ENCODE measurements at regions of chr1 and their contacts with region 1.

Region 1: GRCh38 chr1:15028102-15028501 is 125.4 kb upstream of the TMEM51 start:
- ATAC-seq: peak; percentile 39 to 95 (median 90)
- H3K4me3 ChIP-seq: no peak overlapping the region
- H3K27ac ChIP-seq: no peak overlapping the region
- H3K4me1 ChIP-seq: peaks cover 0 to 12% of the 10 kb centered on the region in 2 donors

Region 2: DNA sequence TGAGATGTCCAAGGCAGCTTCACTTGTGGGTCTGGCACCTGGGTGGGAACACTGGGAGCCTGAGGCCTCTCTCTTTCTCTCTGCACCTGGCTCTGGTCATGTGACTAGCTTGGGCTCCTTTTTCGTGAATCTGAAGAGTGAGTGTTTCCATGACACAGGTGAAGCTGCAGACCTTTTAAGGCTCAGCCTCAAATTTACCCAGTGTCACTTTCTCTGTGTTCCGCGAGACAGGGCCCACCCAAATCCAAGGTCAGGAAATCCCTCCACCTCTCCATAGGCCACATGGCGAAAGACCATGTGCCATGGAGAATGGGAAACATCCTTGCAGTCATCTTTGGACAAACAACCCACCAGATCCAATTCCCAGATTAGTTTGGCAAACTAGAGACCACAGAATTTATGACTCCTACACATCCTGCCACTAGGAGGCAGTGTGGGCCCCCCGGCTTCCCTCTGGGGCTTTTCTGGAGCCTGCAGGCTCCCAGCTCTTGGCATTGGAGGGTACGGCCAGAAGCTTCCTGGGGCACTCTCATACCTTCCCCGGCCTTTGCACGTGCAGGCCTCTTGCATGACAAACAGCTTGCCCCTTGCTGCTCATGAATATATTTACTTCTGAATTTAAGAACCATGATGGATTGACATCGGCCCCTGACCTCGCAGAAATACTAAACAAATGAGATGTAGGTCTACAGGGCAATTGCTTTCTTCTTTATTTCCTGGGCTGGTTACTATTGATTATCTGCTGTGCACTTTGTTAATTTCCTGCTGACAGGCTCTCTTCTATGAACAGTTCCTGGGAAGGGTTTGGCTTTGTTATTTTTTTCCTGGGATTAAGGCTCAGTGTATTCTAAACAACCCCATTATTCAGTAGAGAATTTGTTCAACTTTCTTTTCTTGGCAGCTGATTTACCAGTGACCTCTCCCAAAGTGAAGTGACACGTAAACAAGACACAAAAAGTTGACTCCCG is 248.9 kb before region 1 on chr1:
- in situ Hi-C with region 1: no loop called
- ATAC-seq: peak; percentile 26 to 81 (median 64)
- H3K4me3 ChIP-seq: no peak overlapping the region
- H3K27ac ChIP-seq: no peak overlapping the region
- H3K4me1 ChIP-seq: peaks cover 20 to 24% of the 10 kb centered on the region in 2 donors

Region 3: DNA sequence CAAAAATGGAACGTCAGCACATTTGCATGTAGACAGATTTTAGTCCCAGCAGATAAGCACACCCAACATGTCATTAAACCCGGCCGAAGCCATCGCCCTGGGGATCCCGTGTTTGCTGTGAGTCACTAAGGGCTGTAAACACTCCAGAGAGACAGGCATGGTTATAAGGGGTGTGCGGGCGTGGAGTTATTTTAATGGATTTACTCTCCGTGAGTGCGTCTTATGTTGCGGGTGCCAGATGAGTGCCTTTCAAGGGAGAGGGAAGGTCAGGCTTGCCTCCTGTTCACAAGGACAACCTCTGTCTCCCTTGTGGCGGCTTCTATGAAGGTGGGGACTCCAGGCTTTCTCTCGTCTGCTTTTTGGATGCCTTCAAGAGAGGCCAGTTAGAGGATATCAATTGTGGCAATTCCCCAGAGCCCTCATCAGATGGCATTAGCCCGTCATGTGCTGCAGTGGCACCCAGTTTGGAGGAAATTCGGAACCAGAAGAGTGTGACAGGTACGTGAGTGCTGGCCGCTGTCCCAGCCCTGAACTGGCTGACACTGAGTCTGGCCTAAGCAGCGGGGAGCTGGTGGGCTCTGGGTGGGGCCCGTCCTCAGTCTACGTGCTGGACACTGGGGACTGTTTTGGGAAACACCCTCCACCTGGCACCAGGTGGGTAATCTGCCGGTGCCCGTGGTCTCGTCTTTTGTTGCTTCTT is 98.4 kb before region 1 on chr1:
- in situ Hi-C with region 1: loop called in 1 of 9 experiments (anchors 10 kb)
- ATAC-seq: peak; percentile 77 to 89 (median 82)
- H3K4me3 ChIP-seq: no peak overlapping the region
- H3K27ac ChIP-seq: peak overlapping the region in 1 of 2 donors; percentile 26
- H3K4me1 ChIP-seq: peaks cover 26 to 30% of the 10 kb centered on the region in 2 donors

Region 4: GRCh38 chr1:15311880-15312279 is 283.8 kb after region 1 on chr1:
- in situ Hi-C with region 1: no loop called
- ATAC-seq: no peak
- H3K4me3 ChIP-seq: no peak overlapping the region
- H3K27ac ChIP-seq: no peak overlapping the region
- H3K4me1 ChIP-seq: peaks cover 0 to 7% of the 10 kb centered on the region in 2 donors